Calu3 (cell line): ENCODE measurements at regions of chr14 and their contacts with region 1.

Region 1: DNA sequence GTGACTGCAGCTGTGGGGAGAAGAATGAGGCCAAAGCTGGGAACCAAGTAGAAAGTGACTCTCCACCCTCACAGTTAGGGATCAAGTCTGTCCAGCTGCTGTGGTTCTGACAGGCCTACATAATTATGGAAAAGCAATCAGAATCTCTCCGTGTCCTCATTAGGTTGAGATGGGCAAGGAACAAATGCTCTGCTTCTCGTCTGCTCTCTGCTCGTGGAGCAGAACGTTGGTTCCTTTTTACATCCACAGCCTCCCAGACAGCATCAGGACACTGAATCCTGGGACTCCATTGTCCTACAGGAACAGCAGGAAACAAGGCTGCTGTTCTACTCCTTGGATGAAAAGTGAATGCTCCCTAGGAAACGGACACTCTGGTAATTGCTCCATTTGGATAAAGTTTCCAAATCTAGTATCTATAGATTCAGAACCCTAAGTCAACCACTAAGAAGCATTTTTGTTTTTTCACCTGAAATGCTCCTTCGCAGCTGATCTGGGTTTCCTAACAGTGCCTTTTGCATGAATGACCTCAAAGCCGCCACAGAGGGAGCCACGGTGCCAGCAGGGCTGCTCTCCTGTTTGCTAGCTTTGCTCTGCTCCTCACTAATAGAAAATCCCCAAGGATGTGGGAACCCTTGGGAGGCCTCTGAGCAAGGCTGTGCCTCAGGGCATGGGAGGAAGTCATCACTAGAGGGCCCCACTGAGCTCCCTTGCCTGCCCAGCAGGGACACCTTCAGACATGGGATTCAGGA is 102.0 kb downstream of the EGLN3 start:
- DNase-seq: peak; percentile 85
- H3K4me3 Mint-ChIP-seq: no peak overlapping the region
- H3K27ac Mint-ChIP-seq: no peak overlapping the region
- H3K4me1 Mint-ChIP-seq: no peaks in the 10 kb centered on the region
- H3K27me3 Mint-ChIP-seq: peaks cover 38% of the 10 kb centered on the region
- CTCF ChIP-seq: peak; percentile 44

Region 2: GRCh38 chr14:33908540-33909223 is 59.8 kb after region 1 on chr14:
- CTCF ChIA-PET with region 1: no interaction called
- intact Hi-C with region 1: loop called (anchors 5 kb)
- DNase-seq: no peak
- H3K4me3 Mint-ChIP-seq: no peak overlapping the region
- H3K27ac Mint-ChIP-seq: no peak overlapping the region
- H3K4me1 Mint-ChIP-seq: peaks cover 5% of the 10 kb centered on the region
- H3K27me3 Mint-ChIP-seq: no peaks in the 10 kb centered on the region
- CTCF ChIP-seq: no peak

Region 3: GRCh38 chr14:33959692-33960151 is 110.8 kb after region 1 on chr14:
- CTCF ChIA-PET with region 1: no interaction called
- intact Hi-C with region 1: loop called (anchors 5 kb)
- DNase-seq: no peak
- H3K4me3 Mint-ChIP-seq: no peak overlapping the region
- H3K27ac Mint-ChIP-seq: no peak overlapping the region
- H3K4me1 Mint-ChIP-seq: peaks cover 3% of the 10 kb centered on the region
- H3K27me3 Mint-ChIP-seq: no peaks in the 10 kb centered on the region
- CTCF ChIP-seq: no peak